ENCODE measurements at regions of chr6 and their contacts with region 1.

Region 1: DNA sequence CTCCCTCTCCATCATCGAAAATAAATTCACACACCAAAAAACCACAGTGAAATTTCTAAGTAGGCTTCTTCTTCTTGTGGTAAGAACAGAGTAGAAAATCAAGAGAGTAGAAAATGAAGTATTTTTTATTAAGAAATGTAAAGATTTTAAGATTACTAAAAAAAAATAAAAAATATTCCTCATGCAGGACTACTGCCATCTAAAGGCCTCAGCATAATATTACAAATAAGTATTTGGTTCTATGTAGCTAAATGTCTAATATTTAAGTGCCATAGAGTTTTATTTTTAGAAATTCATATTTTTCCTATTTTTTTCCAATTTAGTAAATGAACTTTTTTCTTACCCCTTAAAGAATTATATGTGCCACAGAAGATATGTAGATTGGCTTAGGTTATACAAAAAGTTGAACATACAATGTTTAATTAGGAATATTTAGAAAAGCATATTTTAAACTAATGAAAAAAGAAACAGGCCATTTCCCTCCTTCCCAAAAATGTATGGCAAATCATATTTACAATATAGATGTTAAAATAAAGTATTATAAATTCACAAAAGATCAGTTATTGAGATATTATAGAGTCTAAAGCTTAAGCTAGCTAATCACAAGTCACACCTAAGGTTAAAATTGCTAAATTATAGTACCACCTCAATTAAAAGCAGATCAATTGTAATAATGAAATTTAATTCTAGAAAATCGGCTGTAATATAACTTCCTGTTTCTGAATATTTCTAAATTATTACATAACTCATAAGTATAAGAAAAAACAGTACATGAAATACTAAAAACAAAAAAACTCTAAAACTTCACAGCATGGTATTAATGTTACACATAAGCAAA is 3.5 kb upstream of the NT5DC1 start:
- DNase-seq: no peak
- ATAC-seq: no peak
- H3K4me3 ChIP-seq: no peak overlapping the region
- H3K27ac ChIP-seq: no peak overlapping the region
- H3K4me1 ChIP-seq: peaks cover 8% of the 10 kb centered on the region
- H3K27me3 ChIP-seq: no peaks in the 10 kb centered on the region
- CTCF ChIP-seq: peak; percentile 62

Region 2: DNA sequence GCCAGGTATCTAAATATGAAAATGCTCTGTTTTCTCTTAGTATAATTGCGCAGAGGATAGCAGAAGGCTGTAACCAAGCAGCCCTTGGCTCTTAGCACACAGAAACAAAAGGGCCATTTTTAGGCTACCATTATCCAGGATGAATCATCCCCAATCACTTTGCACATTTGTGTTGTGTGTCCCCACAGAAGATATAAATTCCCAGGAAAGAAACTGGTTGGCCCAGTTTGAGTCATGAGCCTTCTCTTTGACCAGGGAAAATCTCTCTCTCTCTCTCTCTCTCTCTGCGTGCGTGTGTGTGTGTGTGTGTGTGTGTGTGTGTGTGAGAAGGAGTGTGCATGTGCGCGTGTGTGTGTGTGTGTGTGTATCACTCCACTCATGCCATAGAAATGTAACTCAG is 215.0 kb before region 1 on chr6:
- intact Hi-C with region 1: no loop called
- DNase-seq: no peak
- ATAC-seq: no peak
- H3K4me3 ChIP-seq: no peak overlapping the region
- H3K27ac ChIP-seq: no peak overlapping the region
- H3K4me1 ChIP-seq: no peaks in the 10 kb centered on the region
- H3K27me3 ChIP-seq: no peaks in the 10 kb centered on the region
- CTCF ChIP-seq: no peak

Region 3: GRCh38 chr6:116010790-116011401 is 86.3 kb before region 1 on chr6:
- intact Hi-C with region 1: loop called (anchors 10 kb)
- DNase-seq: peak; percentile 67
- ATAC-seq: peak; percentile 90
- H3K4me3 ChIP-seq: no peak overlapping the region
- H3K27ac ChIP-seq: no peak overlapping the region
- H3K4me1 ChIP-seq: peaks cover 24% of the 10 kb centered on the region
- H3K27me3 ChIP-seq: no peaks in the 10 kb centered on the region
- CTCF ChIP-seq: peak; percentile 88